Adrenal gland (tissue), 19 donors: ENCODE measurements at regions of chr1 and their contacts with region 1.

Region 1: DNA sequence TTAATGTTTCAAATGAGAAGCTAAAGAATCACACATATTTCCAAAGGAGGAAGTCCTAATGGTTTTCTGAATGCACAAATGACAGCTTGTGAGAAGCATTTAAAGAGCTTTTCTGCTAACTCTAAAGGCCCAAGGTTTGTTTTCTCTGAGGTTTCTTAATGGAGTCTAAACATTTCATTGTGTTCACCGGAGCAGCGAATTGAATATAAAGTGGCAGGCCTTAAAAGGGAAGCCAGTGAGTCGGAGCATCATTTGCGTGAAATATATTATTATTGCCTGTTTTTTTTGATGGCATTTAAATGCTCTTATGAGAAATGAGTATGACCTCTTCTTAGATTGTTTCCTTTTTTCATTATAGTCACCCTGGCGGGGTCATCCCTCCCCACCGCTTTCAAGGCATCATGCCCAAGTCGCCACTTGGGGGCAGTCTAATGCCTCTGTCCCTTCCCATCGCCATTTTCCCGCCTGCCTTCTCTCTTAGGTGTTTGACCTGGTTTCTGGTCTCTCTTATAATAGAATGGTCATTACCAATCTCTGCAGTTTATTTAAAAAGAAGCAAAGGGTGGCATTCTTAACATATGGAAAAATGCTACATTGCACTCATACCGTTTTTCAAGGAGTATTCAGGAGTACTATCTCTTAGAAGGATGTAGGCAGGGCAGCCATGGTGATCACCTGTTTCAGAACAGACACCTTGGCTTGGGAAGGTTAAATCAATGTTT is 25.3 kb upstream of the OVAAL start:
- DNase-seq: peak; percentile 68 to 90 (median 77)
- H3K4me3 ChIP-seq: no peak overlapping the region
- H3K27ac ChIP-seq: no peak overlapping the region
- H3K4me1 ChIP-seq: no peaks in the 10 kb centered on the region
- H3K27me3 ChIP-seq: no peaks in the 10 kb centered on the region
- CTCF ChIP-seq: peak; percentile 71 to 93 (median 87)
- POLR2A ChIP-seq: no peak

Region 2: DNA sequence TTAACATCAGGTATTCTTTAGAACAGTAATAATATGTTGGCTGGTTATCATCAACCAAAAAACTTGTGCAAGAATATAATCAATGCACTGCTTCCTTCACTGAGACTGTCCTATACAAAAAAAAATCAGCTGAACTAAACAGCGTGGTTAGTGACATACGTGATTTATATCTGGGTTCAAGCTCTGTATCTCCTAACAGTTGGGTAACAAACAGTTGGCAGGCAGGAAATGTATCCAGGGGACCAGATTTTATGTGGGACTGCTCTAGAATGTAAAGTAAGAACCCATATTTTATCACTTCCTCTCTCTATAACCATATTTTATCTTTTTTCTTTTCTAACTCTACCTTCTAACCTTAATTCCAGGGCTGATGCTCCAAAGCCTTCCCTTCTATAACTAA is 39.1 kb before region 1 on chr1:
- intact Hi-C with region 1: no loop called
- DNase-seq: no peak
- H3K4me3 ChIP-seq: no peak overlapping the region
- H3K27ac ChIP-seq: no peak overlapping the region
- H3K4me1 ChIP-seq: peaks cover 0 to 7% of the 10 kb centered on the region in 2 donors
- H3K27me3 ChIP-seq: no peaks in the 10 kb centered on the region
- CTCF ChIP-seq: no peak
- POLR2A ChIP-seq: no peak

Region 3: GRCh38 chr1:180863158-180863775 is 329.8 kb after region 1 on chr1:
- intact Hi-C with region 1: loop called (anchors 5 kb)
- DNase-seq: peak in 3 of 7 donors; percentile 39 to 50 (median 44)
- H3K4me3 ChIP-seq: no peak overlapping the region
- H3K27ac ChIP-seq: no peak overlapping the region
- H3K4me1 ChIP-seq: no peaks in the 10 kb centered on the region
- H3K27me3 ChIP-seq: no peaks in the 10 kb centered on the region
- CTCF ChIP-seq: peak; percentile 66 to 85 (median 76)
- POLR2A ChIP-seq: no peak